Mammary epithelial cell (primary cell): ENCODE measurements at regions of chrX and their contacts with region 1.

Region 1: DNA sequence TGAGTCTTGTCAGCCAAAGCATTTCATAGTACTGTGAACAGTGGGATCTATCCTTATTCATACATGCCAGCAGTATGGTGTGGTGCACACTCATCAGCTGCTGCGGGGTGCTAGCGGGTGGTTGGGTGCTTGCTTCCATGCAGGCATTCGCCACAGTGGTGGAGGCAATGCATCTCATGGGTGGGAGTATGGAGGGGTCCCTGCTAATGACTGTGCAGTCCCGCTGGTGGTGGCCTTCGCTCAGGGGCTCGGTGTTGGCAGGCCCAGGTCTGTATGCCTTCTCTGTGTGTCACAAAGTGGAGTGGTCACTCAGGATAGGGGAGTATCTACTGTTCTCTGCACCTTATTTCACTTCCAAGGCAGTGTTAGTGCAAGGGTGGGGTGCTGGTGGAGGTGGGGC is 122.6 kb downstream of the POU3F4 start:
- DNase-seq: no peak
- H3K4me3 ChIP-seq: no peak overlapping the region
- H3K27ac ChIP-seq: no peak overlapping the region
- H3K4me1 ChIP-seq: no peaks in the 10 kb centered on the region
- H3K27me3 ChIP-seq: no peaks in the 10 kb centered on the region
- CTCF ChIP-seq: no peak

Region 2: DNA sequence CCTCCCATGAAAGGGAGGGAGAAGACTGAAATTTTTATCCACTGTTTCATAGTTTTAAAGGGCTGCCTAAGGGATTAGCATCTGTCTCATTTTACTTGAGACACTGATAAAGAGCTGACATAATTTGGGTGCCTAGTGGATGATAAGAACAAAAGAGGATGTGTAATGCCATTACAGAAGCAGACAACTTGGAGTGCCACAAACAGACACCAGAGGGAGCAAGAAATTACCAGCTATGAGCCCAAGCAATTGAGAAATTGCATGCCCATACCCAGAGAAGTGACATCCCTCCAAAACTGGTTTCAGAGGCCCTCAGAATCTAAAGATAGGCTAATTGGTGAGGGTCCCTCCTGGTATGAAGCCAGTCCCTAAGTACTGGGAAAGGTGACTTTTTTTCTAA is 161.1 kb before region 1 on chrX:
- CTCF ChIA-PET with region 1: interaction called, 10 read pairs
- dilution Hi-C with region 1: no loop called
- in situ Hi-C with region 1: no loop called
- intact Hi-C with region 1: loop called (anchors 1 kb)
- DNase-seq: peak; percentile 6
- H3K4me3 ChIP-seq: no peak overlapping the region
- H3K27ac ChIP-seq: no peak overlapping the region
- H3K4me1 ChIP-seq: no peaks in the 10 kb centered on the region
- H3K27me3 ChIP-seq: no peaks in the 10 kb centered on the region
- CTCF ChIP-seq: peak; percentile 29 to 63

Region 3: GRCh38 chrX:83658731-83659130 is 28.1 kb after region 1 on chrX:
- CTCF ChIA-PET with region 1: no interaction called
- dilution Hi-C with region 1: no loop called
- in situ Hi-C with region 1: no loop called
- intact Hi-C with region 1: no loop called
- DNase-seq: no peak
- H3K4me3 ChIP-seq: no peak overlapping the region
- H3K27ac ChIP-seq: no peak overlapping the region
- H3K4me1 ChIP-seq: no peaks in the 10 kb centered on the region
- H3K27me3 ChIP-seq: no peaks in the 10 kb centered on the region
- CTCF ChIP-seq: peak in 1 of 2 donors; percentile 11